Prostate gland (tissue), 2 donors: ENCODE measurements at regions of chr18 and their contacts with region 1.

Region 1: DNA sequence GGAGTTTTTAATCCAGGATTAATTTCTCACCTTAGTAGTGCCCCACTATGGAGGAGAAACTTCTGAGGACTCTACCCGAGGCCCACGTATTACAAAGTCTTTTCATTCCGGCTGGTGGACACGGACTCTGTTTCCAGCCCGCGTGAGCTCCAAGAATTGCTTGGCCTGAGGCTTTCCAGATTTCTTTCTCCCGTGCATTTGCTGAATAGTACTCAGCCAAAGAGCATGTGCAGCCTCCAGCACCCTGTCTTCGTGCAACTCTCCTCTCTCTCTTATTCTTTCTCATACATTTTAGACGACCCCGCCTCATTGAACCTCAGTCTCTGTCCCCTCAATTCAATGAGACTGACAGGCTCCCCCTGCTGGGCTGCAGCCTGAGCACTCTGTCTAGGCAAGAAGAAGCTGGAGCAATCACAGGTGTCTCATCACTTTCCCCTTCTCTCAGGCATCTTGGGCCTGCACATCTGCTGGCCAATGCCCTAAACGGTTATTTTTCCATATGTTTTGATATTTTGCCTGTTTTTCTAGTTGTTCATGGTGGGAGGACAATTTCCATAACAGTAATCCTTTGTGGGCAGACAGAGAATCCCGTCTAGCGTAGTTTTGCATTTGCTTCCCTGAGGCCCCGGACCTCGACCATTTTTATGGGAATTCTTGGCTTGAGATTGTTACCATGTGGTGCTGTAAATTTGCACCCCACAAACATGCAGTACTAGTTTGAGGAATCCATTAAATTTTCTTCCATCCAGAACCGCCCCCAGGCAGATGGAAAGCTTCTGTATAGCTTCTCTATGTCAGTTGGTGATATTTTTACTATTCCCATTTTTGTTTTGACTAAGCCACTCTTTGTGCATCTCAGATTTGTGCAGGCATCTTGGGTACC is 50.1 kb upstream of the LPIN2 start:
- DNase-seq: peak; percentile 40
- H3K4me3 ChIP-seq: no peak overlapping the region
- H3K27ac ChIP-seq: no peak overlapping the region
- H3K4me1 ChIP-seq: no peaks in the 10 kb centered on the region
- H3K27me3 ChIP-seq: no peaks in the 10 kb centered on the region
- CTCF ChIP-seq: peak in 3 of 4 experiments; percentile 47 to 63 (median 59)
- POLR2A ChIP-seq: no peak

Region 2: DNA sequence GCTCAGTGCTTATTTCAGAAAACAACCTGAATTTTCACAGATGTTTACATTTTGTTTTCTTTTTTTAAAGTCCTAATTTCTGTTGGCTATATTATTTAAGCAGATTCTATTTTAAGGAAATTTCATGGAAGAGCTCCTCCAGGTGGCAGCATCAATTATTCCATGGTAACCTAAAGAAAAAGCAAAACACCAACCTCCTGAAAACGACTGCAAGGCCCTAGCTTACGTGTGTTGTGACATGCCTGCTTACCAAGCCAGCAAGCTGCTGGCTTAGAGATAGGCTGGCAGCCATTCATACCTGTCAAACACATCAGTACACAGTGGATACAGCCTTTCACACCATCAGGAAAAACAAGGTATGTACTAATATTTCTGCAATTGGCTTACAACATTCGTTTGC is 115.0 kb before region 1 on chr18:
- intact Hi-C with region 1: loop called (anchors 5 kb)
- DNase-seq: peak; percentile 57
- H3K4me3 ChIP-seq: no peak overlapping the region
- H3K27ac ChIP-seq: no peak overlapping the region
- H3K4me1 ChIP-seq: no peaks in the 10 kb centered on the region
- H3K27me3 ChIP-seq: no peaks in the 10 kb centered on the region
- CTCF ChIP-seq: peak in 3 of 4 experiments; percentile 25 to 62 (median 39)
- POLR2A ChIP-seq: no peak

Region 3: DNA sequence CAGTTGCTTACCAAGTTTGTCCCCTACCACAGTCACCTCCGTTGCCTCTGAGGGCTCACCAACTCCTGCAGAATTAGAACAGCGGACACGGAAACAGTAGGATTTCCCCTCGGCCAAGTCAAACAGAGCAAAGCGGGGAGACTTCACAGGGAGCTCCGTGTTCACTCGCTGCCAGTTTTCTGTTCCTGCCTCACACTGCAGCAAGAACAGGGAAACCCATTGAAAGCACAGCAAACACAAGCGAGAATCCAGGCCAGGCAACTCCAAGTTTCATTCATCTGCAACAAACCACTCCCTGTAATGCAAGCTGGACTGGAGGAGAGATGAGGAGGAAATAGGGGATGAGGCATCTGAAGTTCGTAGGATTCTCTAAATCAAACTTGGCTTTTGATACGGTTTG is 72.5 kb after region 1 on chr18:
- intact Hi-C with region 1: loop called (anchors 10 kb)
- DNase-seq: no peak
- H3K4me3 ChIP-seq: no peak overlapping the region
- H3K27ac ChIP-seq: no peak overlapping the region
- H3K4me1 ChIP-seq: no peaks in the 10 kb centered on the region
- H3K27me3 ChIP-seq: no peaks in the 10 kb centered on the region
- CTCF ChIP-seq: no peak
- POLR2A ChIP-seq: no peak